PC-3 (cell line): ENCODE measurements at regions of chr3 and their contacts with region 1.

Region 1: GRCh38 chr3:53072653-53073552 is 27.0 kb upstream of the SFMBT1 start:
- DNase-seq: peak; percentile 84
- ATAC-seq: peak; percentile 89
- H3K4me3 ChIP-seq: peak overlapping the region; percentile 83
- H3K27ac ChIP-seq: no peak overlapping the region
- H3K4me1 ChIP-seq: peaks cover 14% of the 10 kb centered on the region
- H3K27me3 ChIP-seq: no peaks in the 10 kb centered on the region
- CTCF ChIP-seq: peak; percentile 97

Region 2: GRCh38 chr3:52742418-52743041 is 330.4 kb before region 1 on chr3:
- CTCF ChIA-PET with region 1: no interaction called
- POLR2A ChIA-PET with region 1: no interaction called
- intact Hi-C with region 1: loop called (anchors 5 kb)
- DNase-seq: peak; percentile 59
- ATAC-seq: peak; percentile 81
- H3K4me3 ChIP-seq: no peak overlapping the region
- H3K27ac ChIP-seq: no peak overlapping the region
- H3K4me1 ChIP-seq: no peaks in the 10 kb centered on the region
- H3K27me3 ChIP-seq: no peaks in the 10 kb centered on the region
- CTCF ChIP-seq: peak; percentile 83

Region 3: GRCh38 chr3:52770496-52771333 is 302.2 kb before region 1 on chr3 and contains the start of gene NEK4:
- CTCF ChIA-PET with region 1: no interaction called
- POLR2A ChIA-PET with region 1: no interaction called
- intact Hi-C with region 1: loop called (anchors 10 kb)
- DNase-seq: peak; percentile 95
- ATAC-seq: peak; percentile 99
- H3K4me3 ChIP-seq: peak within 1 kb of the TSS; percentile 83
- H3K27ac ChIP-seq: peak within 1 kb of the TSS; percentile 33; the same call in 1 of the 2 replicates
- H3K4me1 ChIP-seq: peaks cover 13% of the 10 kb centered on the region
- H3K27me3 ChIP-seq: no peaks in the 10 kb centered on the region
- CTCF ChIP-seq: no peak
- total RNA-seq, gene NEK4: 26.6 and 33.6 TPM in 2 replicates

Region 4: DNA sequence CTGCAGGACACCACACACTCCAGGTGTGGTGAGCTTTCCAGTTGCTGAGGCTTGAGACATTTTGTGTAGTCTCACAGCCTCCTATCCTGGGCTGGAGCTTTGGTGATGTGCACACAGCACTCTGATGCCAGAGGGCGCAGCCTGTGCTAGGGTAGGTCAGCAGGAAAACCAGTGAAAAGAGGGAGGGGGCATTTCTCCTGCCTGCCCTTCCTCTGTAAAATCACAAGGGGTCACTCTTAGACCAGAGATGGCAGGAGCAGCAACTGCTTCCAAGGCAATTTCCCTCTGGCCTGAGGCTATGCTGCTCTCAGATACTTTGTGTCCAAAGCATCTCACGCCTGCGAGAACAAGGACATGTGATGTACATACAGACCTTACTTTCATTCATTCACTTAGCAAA is 221.6 kb before region 1 on chr3:
- CTCF ChIA-PET with region 1: no interaction called
- POLR2A ChIA-PET with region 1: no interaction called
- intact Hi-C with region 1: loop called (anchors 1 kb)
- DNase-seq: peak; percentile 51
- ATAC-seq: peak; percentile 80
- H3K4me3 ChIP-seq: no peak overlapping the region
- H3K27ac ChIP-seq: no peak overlapping the region
- H3K4me1 ChIP-seq: no peaks in the 10 kb centered on the region
- H3K27me3 ChIP-seq: no peaks in the 10 kb centered on the region
- CTCF ChIP-seq: peak; percentile 73

Region 5: GRCh38 chr3:52934630-52935530 is 138.0 kb before region 1 on chr3:
- CTCF ChIA-PET with region 1: no interaction called
- POLR2A ChIA-PET with region 1: no interaction called
- intact Hi-C with region 1: loop called (anchors 1 kb)
- DNase-seq: peak; percentile 64
- ATAC-seq: peak; percentile 99
- H3K4me3 ChIP-seq: no peak overlapping the region
- H3K27ac ChIP-seq: no peak overlapping the region
- H3K4me1 ChIP-seq: no peaks in the 10 kb centered on the region
- H3K27me3 ChIP-seq: no peaks in the 10 kb centered on the region
- CTCF ChIP-seq: peak; percentile 88

Region 6: DNA sequence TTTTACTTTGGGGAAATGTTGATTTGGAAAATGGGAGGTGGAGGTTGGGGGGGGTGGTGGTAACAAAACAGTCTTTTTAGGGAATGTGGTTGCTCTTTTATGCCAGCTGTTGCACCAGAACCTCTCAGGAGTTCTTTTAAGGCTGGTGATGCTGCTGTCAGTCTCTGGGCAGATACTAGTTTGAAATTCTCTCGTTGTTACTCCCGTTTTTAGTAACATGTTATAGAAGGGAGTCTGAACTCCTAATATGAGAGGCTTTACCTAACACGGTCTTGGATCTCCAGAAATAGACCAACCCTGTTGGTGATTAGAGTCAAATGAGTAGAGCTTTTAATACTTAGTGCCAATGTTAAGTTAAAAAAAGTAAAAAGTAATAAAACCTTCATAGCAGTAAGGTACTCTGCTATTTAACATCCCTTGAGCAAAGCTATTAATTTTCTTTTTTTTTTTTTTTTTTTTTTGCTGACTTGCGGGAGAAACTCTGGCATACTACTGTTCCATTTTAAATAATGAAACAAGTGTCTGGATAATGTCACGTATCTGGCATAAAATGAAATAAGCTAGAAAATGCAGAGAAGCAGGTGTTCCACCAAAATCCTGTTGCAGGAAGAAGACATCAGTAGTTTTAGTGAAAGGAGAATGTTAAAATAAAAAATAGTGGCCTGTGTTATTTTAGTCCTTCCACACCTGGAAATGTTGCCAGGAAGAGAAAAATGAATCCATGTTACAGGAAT is 578.2 kb after region 1 on chr3:
- CTCF ChIA-PET with region 1: no interaction called
- POLR2A ChIA-PET with region 1: interaction called, 13 read pairs
- intact Hi-C with region 1: no loop called
- DNase-seq: no peak
- ATAC-seq: no peak
- H3K4me3 ChIP-seq: no peak overlapping the region
- H3K27ac ChIP-seq: no peak overlapping the region
- H3K4me1 ChIP-seq: no peaks in the 10 kb centered on the region
- H3K27me3 ChIP-seq: peaks cover 55% of the 10 kb centered on the region
- CTCF ChIP-seq: no peak